ENCODE measurements at regions of chr11 and their contacts with region 1.

Region 1: GRCh38 chr11:46845740-46846509 is at the start of gene CKAP5:
- DNase-seq: peak; percentile 69 to 95
- H3K4me3 ChIP-seq: peak within 1 kb of the TSS; percentile 95 to 100
- H3K27ac ChIP-seq: peak within 1 kb of the TSS; percentile 73 to 78
- H3K4me1 ChIP-seq: peaks cover 0 to 14% of the 10 kb centered on the region in 2 donors
- H3K27me3 ChIP-seq: no peaks in the 10 kb centered on the region
- CTCF ChIP-seq: no peak
- total RNA-seq, gene CKAP5: 13.5 TPM

Region 2: DNA sequence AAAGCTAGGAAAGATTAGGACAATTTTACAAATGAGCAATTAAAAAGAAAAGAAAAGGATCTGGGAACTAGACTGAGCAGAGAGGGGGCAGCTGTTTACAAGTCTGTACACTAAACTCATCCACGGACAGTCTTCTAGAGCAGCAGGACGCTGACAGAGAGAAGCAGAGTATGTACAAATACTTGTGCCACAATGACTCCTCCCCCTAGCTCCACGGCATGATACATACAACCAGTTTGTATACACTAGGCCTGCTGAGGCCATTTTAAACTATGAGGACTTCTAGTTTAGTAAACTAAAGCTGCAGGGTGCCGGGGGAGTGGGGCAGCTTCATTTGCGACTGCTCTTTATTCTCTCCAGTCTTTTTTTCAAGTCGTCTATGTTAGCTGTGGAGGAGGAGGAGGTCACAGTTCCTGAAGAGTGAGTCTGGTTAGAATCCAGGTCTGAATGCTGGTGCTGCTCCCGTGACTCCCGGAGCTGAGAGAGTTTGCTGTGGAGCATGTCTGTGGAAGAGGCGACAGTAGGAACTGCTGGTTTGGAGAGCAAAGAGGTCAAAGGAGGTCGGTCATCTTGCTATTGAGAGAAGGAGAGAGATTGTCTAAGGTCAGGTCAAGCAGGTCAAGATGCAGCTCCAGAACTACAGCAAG is 102.1 kb before region 1 on chr11:
- intact Hi-C with region 1: no loop called
- DNase-seq: peak in 1 of 2 donors; percentile 33
- H3K4me3 ChIP-seq: no peak overlapping the region
- H3K27ac ChIP-seq: peak overlapping the region in 1 of 2 donors; percentile 72
- H3K4me1 ChIP-seq: no peaks in the 10 kb centered on the region
- H3K27me3 ChIP-seq: no peaks in the 10 kb centered on the region
- CTCF ChIP-seq: no peak

Region 3: GRCh38 chr11:46826310-46827044 is 19.4 kb before region 1 on chr11:
- intact Hi-C with region 1: loop called (anchors 1 kb)
- DNase-seq: peak; percentile 47 to 90
- H3K4me3 ChIP-seq: peak overlapping the region; percentile 62 to 88
- H3K27ac ChIP-seq: peak overlapping the region; percentile 49 to 82
- H3K4me1 ChIP-seq: peaks cover 0 to 15% of the 10 kb centered on the region in 2 donors
- H3K27me3 ChIP-seq: no peaks in the 10 kb centered on the region
- CTCF ChIP-seq: peak in 1 of 3 experiments; percentile 25

Measured in ascending aorta (tissue), 2 donors.